HEK293 (cell line): ENCODE measurements at regions of chr9 and their contacts with region 1.

Region 1: GRCh38 chr9:97598461-97599288 is 34.5 kb downstream of the TSTD2 start:
- H3K4me3 ChIP-seq: no peak overlapping the region
- H3K27ac ChIP-seq: no peak overlapping the region
- H3K4me1 ChIP-seq: no peaks in the 10 kb centered on the region
- CTCF ChIP-seq: peak; percentile 68; the same call in 1 of the 2 replicates

Region 2: GRCh38 chr9:97386733-97387503 is 211.8 kb before region 1 on chr9:
- CTCF ChIA-PET with region 1: interaction called, 12 read pairs
- POLR2A ChIA-PET with region 1: no interaction called
- H3K4me3 ChIP-seq: no peak overlapping the region
- H3K27ac ChIP-seq: no peak overlapping the region
- H3K4me1 ChIP-seq: no peaks in the 10 kb centered on the region
- CTCF ChIP-seq: peak; percentile 80

Region 3: GRCh38 chr9:97475059-97475458 is 123.6 kb before region 1 on chr9:
- CTCF ChIA-PET with region 1: interaction called, 188 read pairs
- POLR2A ChIA-PET with region 1: no interaction called
- H3K4me3 ChIP-seq: no peak overlapping the region
- H3K27ac ChIP-seq: no peak overlapping the region
- H3K4me1 ChIP-seq: no peaks in the 10 kb centered on the region
- CTCF ChIP-seq: no peak

Region 4: GRCh38 chr9:97501177-97501971 is 97.3 kb before region 1 on chr9 and contains the start of gene TMOD1:
- CTCF ChIA-PET with region 1: interaction called, 30 read pairs
- POLR2A ChIA-PET with region 1: interaction called, 8 read pairs
- H3K4me3 ChIP-seq: peak within 1 kb of the TSS; percentile 71
- H3K27ac ChIP-seq: peak within 1 kb of the TSS; percentile 63; the same call in 1 of the 2 replicates
- H3K4me1 ChIP-seq: peaks cover 3% of the 10 kb centered on the region; the same call in 1 of the 2 replicates
- CTCF ChIP-seq: 0 out of 2 replicates have a peak, but pooled peaks have one; percentile 21

Region 5: DNA sequence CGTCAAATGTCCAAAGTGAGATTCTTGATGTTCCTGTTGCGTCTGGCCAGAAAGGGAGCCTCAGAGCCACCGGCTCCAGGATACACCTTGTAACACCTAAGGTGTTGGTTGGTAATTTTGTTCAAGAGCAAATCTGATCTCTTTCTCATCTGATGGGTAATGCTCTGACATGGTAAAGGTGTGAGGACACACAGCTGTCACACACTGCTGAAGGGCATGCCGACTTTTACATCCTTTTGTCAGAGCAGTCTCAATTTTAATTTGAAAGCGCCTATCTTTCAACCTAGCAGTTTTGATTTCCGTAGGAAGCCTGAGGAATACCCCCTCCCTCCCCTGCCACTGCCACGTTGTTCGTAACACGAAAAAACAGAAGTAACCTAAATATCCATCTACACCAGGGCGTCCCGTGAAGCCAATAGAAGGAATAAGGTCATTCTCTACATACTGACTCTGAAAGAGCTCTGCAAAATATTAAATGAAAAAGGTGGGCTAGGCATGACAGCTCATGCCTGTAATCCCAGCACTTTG is 22.9 kb before region 1 on chr9:
- CTCF ChIA-PET with region 1: interaction called, 29 read pairs
- POLR2A ChIA-PET with region 1: no interaction called
- H3K4me3 ChIP-seq: no peak overlapping the region
- H3K27ac ChIP-seq: no peak overlapping the region
- H3K4me1 ChIP-seq: no peaks in the 10 kb centered on the region
- CTCF ChIP-seq: no peak

Region 6: GRCh38 chr9:97623946-97624345 is 25.3 kb after region 1 on chr9:
- CTCF ChIA-PET with region 1: interaction called, 14 read pairs
- POLR2A ChIA-PET with region 1: no interaction called
- H3K4me3 ChIP-seq: no peak overlapping the region
- H3K27ac ChIP-seq: no peak overlapping the region
- H3K4me1 ChIP-seq: no peaks in the 10 kb centered on the region
- CTCF ChIP-seq: no peak

Region 7: GRCh38 chr9:97740848-97741821 is 142.5 kb after region 1 on chr9:
- CTCF ChIA-PET with region 1: no interaction called
- POLR2A ChIA-PET with region 1: no interaction called
- H3K4me3 ChIP-seq: no peak overlapping the region
- H3K27ac ChIP-seq: no peak overlapping the region
- H3K4me1 ChIP-seq: no peaks in the 10 kb centered on the region
- CTCF ChIP-seq: no peak

Region 8: GRCh38 chr9:97773723-97774122 is 175.0 kb after region 1 on chr9:
- CTCF ChIA-PET with region 1: no interaction called
- POLR2A ChIA-PET with region 1: no interaction called
- H3K4me3 ChIP-seq: no peak overlapping the region
- H3K27ac ChIP-seq: no peak overlapping the region
- H3K4me1 ChIP-seq: no peaks in the 10 kb centered on the region
- CTCF ChIP-seq: no peak